Heart left ventricle (tissue), 16 donors: ENCODE measurements at regions of chr14 and their contacts with region 1.

Region 1: DNA sequence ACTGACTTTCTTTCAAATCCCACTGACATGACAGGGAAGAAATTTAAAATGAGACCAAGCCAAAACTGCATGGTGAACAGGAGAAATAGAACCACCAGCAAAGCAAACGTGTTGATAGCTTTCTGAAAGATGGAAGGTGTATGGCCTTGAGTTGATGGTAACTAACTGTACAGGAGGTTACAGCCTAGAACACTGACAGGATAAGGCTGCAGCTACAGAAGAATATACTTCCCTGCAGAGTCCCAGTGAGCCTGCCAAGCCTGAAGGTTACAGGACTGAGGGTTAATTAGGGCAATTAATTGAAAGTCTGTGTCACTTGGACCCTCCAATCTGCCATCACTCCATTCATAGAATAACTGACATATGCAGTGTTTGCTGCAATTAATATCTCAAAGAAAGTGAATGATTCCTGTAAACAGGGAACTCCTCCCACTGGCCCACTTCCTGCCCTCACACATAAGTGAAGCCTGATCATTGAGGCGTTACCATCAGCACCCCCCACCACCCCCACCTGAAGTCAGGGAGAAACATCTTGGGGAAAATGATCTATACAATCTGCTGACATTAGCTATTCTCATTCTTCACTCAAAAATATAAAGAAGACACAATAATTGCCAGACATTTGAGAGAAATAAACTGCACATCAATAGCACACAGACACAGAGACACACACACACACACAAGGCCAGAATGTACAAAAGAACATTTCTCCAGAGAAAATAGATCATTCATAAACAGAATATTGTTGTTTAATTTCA is 73.4 kb downstream of the GTF2A1 start:
- DNase-seq: no peak
- ATAC-seq: no peak
- H3K4me3 ChIP-seq: no peak overlapping the region
- H3K27ac ChIP-seq: no peak overlapping the region
- H3K4me1 ChIP-seq: peaks cover 0 to 4% (median 0%) of the 10 kb centered on the region in 12 donors
- H3K27me3 ChIP-seq: no peaks in the 10 kb centered on the region
- CTCF ChIP-seq: no peak
- POLR2A ChIP-seq: no peak

Region 2: GRCh38 chr14:81033698-81034240 is 113.5 kb before region 1 on chr14:
- intact Hi-C with region 1: loop called in 1 of 10 experiments (anchors 10 kb)
- DNase-seq: no peak
- ATAC-seq: peak in 1 of 4 donors; percentile 46
- H3K4me3 ChIP-seq: no peak overlapping the region
- H3K27ac ChIP-seq: peak overlapping the region in 1 of 12 donors; percentile 50
- H3K4me1 ChIP-seq: peaks cover 0 to 10% (median 0%) of the 10 kb centered on the region in 12 donors
- H3K27me3 ChIP-seq: no peaks in the 10 kb centered on the region
- CTCF ChIP-seq: no peak
- POLR2A ChIP-seq: no peak

Region 3: GRCh38 chr14:81087230-81087629 is 60.1 kb before region 1 on chr14:
- intact Hi-C with region 1: loop called in 1 of 10 experiments (anchors 2 kb)
- DNase-seq: no peak
- ATAC-seq: no peak
- H3K4me3 ChIP-seq: no peak overlapping the region
- H3K27ac ChIP-seq: no peak overlapping the region
- H3K4me1 ChIP-seq: no peaks in the 10 kb centered on the region
- H3K27me3 ChIP-seq: no peaks in the 10 kb centered on the region
- CTCF ChIP-seq: no peak
- POLR2A ChIP-seq: no peak

Region 4: DNA sequence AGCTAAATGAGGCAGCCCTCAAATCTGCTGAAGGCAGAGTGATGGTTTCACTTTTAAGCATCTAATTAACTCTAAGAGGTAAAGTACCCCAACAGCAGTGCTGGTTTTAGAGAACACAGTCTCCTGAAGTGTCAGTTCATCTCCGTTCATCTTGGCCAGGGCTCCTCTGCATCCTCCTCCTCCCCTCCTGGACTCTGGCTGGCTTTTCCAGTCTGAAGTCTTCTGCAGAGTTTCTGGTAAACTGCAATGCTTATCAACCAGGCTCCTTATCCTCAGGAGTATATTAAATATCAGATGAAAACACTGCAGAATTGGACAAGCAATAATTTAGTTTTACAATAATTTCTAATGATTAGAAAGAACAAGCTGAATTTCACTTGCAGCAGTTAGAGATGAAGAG is 41.9 kb before region 1 on chr14:
- intact Hi-C with region 1: no loop called
- DNase-seq: no peak
- ATAC-seq: no peak
- H3K4me3 ChIP-seq: no peak overlapping the region
- H3K27ac ChIP-seq: no peak overlapping the region
- H3K4me1 ChIP-seq: no peaks in the 10 kb centered on the region
- H3K27me3 ChIP-seq: no peaks in the 10 kb centered on the region
- CTCF ChIP-seq: no peak
- POLR2A ChIP-seq: no peak

Region 5: GRCh38 chr14:81324018-81324417 is 176.7 kb after region 1 on chr14:
- intact Hi-C with region 1: no loop called
- DNase-seq: no peak
- ATAC-seq: no peak
- H3K4me3 ChIP-seq: no peak overlapping the region
- H3K27ac ChIP-seq: no peak overlapping the region
- H3K4me1 ChIP-seq: no peaks in the 10 kb centered on the region
- H3K27me3 ChIP-seq: peaks cover 0 to 19% (median 0%) of the 10 kb centered on the region in 9 donors
- CTCF ChIP-seq: no peak
- POLR2A ChIP-seq: no peak